Breast epithelium (tissue), 4 donors: ENCODE measurements at regions of chr4 and their contacts with region 1.

Region 1: GRCh38 chr4:173076903-173077634 is 91.5 kb upstream of the GALNT7 start:
- DNase-seq: no peak
- H3K4me3 ChIP-seq: no peak overlapping the region
- H3K27ac ChIP-seq: no peak overlapping the region
- H3K4me1 ChIP-seq: no peaks in the 10 kb centered on the region
- H3K27me3 ChIP-seq: no peaks in the 10 kb centered on the region
- CTCF ChIP-seq: no peak
- POLR2A ChIP-seq: no peak

Region 2: DNA sequence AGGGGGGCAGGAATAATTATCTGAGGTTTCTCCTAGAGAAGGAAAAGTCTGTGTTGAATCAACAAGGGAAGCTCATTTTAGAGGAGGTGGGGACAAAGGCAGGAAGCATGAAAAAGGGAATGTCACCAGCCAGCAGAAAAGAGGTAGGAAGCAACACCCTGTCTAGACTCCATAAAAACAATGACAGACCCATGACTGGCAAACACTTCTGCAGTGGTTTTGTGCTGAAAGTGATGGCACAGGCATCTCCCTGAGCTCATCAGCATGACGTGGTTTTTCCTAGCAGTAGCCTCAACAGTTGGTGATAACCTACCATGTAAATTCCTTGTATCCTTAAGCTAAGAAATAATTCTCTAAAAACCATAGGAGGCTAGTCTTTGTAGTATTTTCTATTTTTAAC is 19.2 kb before region 1 on chr4:
- intact Hi-C with region 1: loop called (anchors 2 kb)
- DNase-seq: no peak
- H3K4me3 ChIP-seq: no peak overlapping the region
- H3K27ac ChIP-seq: no peak overlapping the region
- H3K4me1 ChIP-seq: no peaks in the 10 kb centered on the region
- H3K27me3 ChIP-seq: no peaks in the 10 kb centered on the region
- CTCF ChIP-seq: no peak
- POLR2A ChIP-seq: no peak